Dendritic cell treated with granulocyte-macrophage colony-stimulating factor and Interleukin-4, amounts not matched to agents 40 ng/mL and 50 ng/mL, for 4 days (primary cell): ENCODE measurements at regions of chr20 and their contacts with region 1.

Region 1: GRCh38 chr20:48709744-48710695 is 117.8 kb downstream of the PREX1 start:
- H3K4me3 Mint-ChIP-seq: no peak overlapping the region
- H3K27ac Mint-ChIP-seq: no peak overlapping the region
- H3K4me1 Mint-ChIP-seq: peaks cover 77% of the 10 kb centered on the region
- H3K27me3 Mint-ChIP-seq: no peaks in the 10 kb centered on the region

Region 2: DNA sequence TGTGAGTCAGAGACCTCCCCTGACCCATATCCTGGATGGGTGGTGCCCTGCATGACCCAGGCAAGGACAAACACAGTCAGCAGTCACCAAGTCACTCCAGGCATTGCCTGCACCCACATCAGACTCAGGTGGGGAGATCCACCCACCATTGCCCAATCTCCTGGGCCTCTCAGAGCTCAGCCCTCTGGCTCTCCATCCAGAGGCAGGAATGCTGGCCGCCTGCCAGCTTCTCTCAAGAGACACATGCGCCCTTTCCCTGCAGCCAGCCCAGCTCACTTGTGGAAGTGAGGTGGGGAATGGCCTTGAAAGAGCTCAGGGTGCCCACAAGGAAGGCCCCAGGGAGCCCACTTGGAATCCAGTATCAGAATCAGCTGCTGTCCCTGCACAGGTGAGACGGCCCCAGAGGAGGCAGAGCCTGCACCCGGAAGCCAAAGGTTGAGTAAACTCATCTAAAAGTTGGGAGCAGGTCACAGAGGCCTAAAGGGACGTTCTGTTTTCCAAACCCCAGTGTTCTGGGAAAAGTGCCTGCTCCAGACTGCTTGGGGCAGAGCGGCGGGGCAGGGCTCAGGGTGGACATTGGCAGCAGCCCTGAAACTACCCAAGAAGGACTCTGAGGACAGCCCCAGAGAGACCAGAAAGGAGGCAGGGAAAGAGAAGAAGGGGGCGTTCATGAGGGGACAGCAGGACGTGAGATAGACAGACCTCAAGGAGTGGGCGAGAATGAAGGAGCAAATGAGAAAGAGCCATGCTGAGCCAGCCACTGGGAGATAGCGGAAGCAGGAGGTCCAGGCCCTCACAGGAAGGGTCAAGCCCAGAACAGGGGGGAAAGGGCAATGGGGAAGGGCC is 11.9 kb before region 1 on chr20:
- intact Hi-C with region 1: no loop called
- H3K4me3 Mint-ChIP-seq: no peak overlapping the region
- H3K27ac Mint-ChIP-seq: no peak overlapping the region
- H3K4me1 Mint-ChIP-seq: peaks cover 17% of the 10 kb centered on the region
- H3K27me3 Mint-ChIP-seq: no peaks in the 10 kb centered on the region

Region 3: DNA sequence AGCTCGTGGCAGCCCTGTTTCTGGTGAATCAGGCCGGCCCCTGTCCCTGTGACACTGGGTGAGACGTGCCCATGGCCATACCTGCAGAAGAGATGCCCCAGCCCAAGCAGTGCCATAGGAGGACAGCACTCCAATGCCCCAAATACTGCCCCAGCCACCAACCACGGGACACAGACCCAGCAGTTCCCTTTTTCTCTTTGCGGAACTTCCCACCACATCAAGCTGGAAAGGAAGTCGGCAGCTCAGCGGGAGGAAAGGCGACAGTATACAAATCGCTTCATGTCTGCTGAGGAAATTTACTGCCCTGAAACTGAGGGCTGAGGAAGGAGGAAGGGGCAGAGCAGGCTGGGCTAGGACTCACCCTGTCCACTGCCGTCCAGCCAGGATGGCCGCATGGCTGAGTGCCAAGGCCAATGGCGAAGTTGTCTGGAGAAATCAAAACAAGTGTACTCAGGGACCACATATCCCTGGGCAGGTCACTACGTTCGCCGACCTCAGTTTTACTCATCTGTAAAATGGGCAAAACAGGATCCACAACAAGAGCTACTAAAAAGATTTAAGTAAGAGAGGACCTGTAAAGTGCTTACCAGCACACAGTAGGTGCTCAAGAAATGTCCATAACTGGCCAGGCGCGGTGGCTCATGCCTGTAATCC is 62.5 kb after region 1 on chr20:
- intact Hi-C with region 1: loop called (anchors 5 kb)
- H3K4me3 Mint-ChIP-seq: no peak overlapping the region
- H3K27ac Mint-ChIP-seq: peak overlapping the region; percentile 62
- H3K4me1 Mint-ChIP-seq: peaks cover 100% of the 10 kb centered on the region
- H3K27me3 Mint-ChIP-seq: no peaks in the 10 kb centered on the region

Region 4: GRCh38 chr20:48921151-48921898 is 211.3 kb after region 1 on chr20 and contains the start of gene ARFGEF2:
- intact Hi-C with region 1: loop called (anchors 5 kb)
- H3K4me3 Mint-ChIP-seq: peak within 1 kb of the TSS; percentile 94
- H3K27ac Mint-ChIP-seq: peak within 1 kb of the TSS; percentile 89
- H3K4me1 Mint-ChIP-seq: peaks cover 52% of the 10 kb centered on the region
- H3K27me3 Mint-ChIP-seq: no peaks in the 10 kb centered on the region